Mammary epithelial cell (primary cell): ENCODE measurements at regions of chr4 and their contacts with region 1.

Region 1: DNA sequence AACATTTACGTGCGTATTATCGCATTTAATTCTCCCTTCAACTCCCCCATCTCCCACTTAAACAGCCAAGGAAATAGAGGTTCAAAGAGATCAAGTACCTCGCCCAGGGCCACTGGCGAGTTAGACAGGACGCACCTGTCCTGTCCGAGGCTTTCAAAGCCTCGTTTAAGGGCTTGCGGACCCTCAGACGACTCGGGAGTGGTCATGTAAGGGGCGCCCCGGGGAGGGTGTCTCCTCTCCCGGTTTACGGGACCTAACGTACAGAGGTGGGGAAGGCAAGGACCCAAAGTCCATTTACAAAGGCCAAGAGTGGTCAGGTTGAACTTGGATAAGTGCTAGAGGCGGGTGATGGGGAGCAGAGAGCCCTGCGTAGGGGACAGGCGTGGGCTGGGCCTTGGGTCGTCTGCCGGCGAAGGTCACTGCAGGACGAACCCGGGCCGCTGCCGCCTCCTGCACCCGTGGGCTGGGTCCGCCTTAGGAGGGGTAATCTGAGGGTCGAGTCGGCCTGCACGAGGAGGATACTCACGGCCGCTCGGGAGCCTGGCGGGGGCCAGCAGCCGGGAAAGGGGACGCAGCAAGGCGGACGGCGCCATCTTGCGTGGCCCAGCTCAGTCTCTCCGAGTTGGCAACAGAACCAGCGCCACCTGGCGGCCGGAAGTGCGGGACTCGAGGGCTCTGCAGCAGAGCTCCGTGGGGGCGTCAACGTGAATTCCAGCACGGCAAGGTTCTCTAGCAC is 5.9 kb upstream of the NAA15 start:
- DNase-seq: peak; percentile 84
- H3K4me3 ChIP-seq: peak overlapping the region; percentile 75 to 84 (median 79)
- H3K27ac ChIP-seq: peak overlapping the region; percentile 85
- H3K4me1 ChIP-seq: peaks cover 26% of the 10 kb centered on the region
- H3K27me3 ChIP-seq: no peaks in the 10 kb centered on the region
- CTCF ChIP-seq: peak; percentile 83 to 98

Region 2: GRCh38 chr4:139030614-139031235 is 264.6 kb before region 1 on chr4:
- CTCF ChIA-PET with region 1: no interaction called
- dilution Hi-C with region 1: no loop called
- in situ Hi-C with region 1: no loop called
- intact Hi-C with region 1: loop called (anchors 2 kb)
- DNase-seq: peak; percentile 66
- H3K4me3 ChIP-seq: no peak overlapping the region
- H3K27ac ChIP-seq: no peak overlapping the region
- H3K4me1 ChIP-seq: no peaks in the 10 kb centered on the region
- H3K27me3 ChIP-seq: no peaks in the 10 kb centered on the region
- CTCF ChIP-seq: peak; percentile 82 to 93

Region 3: GRCh38 chr4:139099366-139099982 is 195.9 kb before region 1 on chr4:
- CTCF ChIA-PET with region 1: no interaction called
- dilution Hi-C with region 1: loop called (anchors 10 kb)
- in situ Hi-C with region 1: no loop called
- intact Hi-C with region 1: loop called (anchors 1 kb)
- DNase-seq: peak; percentile 70
- H3K4me3 ChIP-seq: no peak overlapping the region
- H3K27ac ChIP-seq: no peak overlapping the region
- H3K4me1 ChIP-seq: no peaks in the 10 kb centered on the region
- H3K27me3 ChIP-seq: no peaks in the 10 kb centered on the region
- CTCF ChIP-seq: peak; percentile 88 to 93

Region 4: DNA sequence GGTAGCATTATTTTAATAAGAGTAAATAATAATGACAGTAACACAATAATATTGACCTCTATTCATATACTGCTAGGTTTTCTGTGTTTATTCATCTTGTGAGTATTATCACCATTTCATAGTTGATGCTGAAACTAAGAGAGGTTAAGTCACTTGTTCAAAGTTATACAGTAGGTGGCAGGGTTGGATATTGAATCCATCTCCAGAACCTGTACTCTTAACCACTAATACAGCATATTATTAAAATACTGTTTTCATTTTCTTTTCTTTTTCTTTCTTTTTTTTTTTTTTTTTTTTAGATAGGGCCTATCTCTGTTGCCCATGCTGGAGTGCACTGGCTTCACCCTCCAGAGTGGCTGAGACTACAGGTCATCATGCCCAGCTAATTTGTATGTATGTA is 111.2 kb before region 1 on chr4:
- CTCF ChIA-PET with region 1: no interaction called
- dilution Hi-C with region 1: no loop called
- in situ Hi-C with region 1: no loop called
- intact Hi-C with region 1: loop called (anchors 1 kb)
- DNase-seq: no peak
- H3K4me3 ChIP-seq: no peak overlapping the region
- H3K27ac ChIP-seq: no peak overlapping the region
- H3K4me1 ChIP-seq: no peaks in the 10 kb centered on the region
- H3K27me3 ChIP-seq: no peaks in the 10 kb centered on the region
- CTCF ChIP-seq: peak; percentile 5 to 33

Region 5: DNA sequence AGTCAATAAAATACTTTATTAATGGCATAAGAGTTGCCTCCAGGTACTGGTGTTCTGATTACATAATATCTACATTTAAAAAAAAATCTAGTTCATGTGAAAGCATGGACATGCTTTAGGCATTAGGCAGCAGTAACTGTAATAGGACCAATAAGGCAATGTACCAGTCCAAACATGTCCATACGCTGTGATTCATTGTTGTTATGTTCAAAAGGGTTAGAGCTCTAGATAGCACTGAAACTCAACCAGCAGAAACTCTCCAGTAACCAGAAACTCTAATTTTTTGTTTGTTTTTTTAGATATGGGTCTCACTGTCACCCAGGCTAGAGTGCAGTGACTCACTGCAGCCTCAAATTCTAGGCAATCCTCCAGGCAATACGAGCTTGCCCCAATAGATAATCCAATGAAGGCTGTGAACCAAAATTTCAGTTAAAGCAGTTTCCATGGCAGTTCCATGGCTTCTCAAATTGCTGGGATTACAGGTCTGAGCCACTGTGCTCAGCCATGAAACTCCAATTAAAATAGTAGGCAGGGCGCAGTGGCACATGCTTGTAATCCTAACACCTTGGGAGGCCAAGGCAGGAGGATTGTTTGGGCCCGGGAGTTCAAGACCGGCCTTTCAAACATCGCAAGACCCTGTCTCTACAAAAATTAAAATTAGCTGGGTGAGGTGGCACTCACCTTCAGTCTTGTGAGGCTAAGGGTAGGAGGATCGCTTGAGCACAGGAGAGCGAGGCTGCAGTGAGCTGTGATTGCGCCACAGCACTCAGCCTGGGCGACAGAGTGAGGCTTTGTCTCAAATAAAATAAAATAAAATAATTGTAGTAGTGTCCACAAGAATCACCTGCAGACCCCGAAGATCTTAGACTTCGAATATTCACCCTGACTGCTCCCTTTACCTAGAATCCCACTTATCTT is 51.7 kb before region 1 on chr4:
- CTCF ChIA-PET with region 1: interaction called, 3 read pairs
- dilution Hi-C with region 1: no loop called
- in situ Hi-C with region 1: no loop called
- intact Hi-C with region 1: loop called (anchors 1 kb)
- DNase-seq: peak; percentile 100
- H3K4me3 ChIP-seq: no peak overlapping the region
- H3K27ac ChIP-seq: peak overlapping the region; percentile 89
- H3K4me1 ChIP-seq: peaks cover 37% of the 10 kb centered on the region
- H3K27me3 ChIP-seq: no peaks in the 10 kb centered on the region
- CTCF ChIP-seq: no peak